HCT116 (cell line): ENCODE measurements at regions of chr11 and their contacts with region 1.

Region 1: DNA sequence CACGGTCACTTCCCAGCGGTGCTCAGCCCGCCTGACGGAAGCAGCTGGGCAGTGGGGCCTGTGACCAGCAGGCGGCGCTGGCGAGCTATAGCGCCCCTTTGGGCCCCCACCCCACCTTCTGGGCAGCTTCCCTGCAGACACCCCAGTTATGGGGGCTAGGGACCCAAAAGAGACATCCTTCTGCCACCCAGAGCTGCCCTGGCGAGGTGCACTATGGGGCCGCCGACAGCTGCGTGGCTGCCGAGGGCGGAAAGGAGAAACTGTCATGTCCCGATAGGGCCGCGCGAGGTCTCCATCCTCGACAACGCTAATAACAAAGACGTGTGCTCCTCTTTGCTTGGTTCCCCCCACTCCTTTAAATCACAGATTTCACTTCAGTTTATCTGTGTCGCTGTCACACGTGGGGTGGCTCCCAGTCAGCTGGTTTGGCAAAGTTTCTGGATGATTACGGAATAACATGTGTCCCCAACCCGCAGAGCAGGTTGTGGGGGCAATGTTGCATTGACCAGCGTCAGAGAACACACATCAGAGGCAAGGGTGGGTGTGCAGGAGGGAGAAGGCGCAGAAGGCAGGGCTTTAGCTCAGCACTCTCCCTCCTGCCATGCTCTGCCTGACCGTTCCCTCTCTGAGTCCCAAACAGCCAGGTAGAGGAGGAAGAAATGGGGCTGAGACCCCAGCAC is 674 bp upstream of the MYO7A start:
- DNase-seq: no peak
- ATAC-seq: peak; percentile 89
- H3K4me3 ChIP-seq: peak overlapping the region; percentile 43 to 60
- H3K27ac ChIP-seq: no peak overlapping the region; the same call in 1 of the 2 replicates
- H3K4me1 ChIP-seq: peaks cover 3 to 15% of the 10 kb centered on the region in 2 experiments; a peak in 3 of 4 replicates
- H3K27me3 ChIP-seq: no peaks in the 10 kb centered on the region
- CTCF ChIP-seq: peak; percentile 99
- POLR2A ChIP-seq: no peak
- RAD21 ChIP-seq: peak; percentile 84

Region 2: DNA sequence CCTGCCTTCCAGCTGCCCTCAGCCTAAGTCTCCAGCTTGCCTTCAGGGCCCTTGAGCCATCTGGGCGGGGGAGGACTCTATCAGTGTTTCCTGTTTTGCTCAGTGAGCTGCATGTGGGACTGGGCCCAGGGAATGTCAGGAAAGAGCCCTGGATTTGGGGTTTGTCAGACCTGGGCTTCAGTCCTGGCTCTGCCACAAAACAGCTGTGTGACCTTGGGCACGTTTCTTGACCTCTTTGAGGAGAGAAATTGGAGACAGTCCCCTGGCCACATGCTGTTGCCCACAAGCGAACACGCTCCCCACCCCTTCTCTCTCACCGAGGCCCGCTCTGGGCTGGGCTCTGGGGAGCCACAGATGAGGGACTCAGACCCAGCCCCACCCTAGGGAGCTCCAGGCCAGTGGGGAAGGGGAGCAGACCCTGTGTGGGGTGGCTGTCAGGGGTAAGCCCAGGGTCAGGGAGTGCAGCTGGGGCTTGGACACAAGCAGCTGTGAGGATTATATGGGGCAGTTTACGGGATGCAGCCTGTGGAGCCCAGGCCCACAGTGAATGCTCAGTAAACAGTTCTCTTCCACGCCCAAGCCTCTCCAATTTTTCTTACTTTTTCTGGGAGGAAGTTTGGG is 13.0 kb after region 1 on chr11:
- CTCF ChIA-PET with region 1: interaction called, 15 read pairs
- POLR2A ChIA-PET with region 1: no interaction called
- RAD21 ChIA-PET with region 1: no interaction called
- intact Hi-C with region 1: no loop called
- DNase-seq: no peak
- ATAC-seq: no peak
- H3K4me3 ChIP-seq: no peak overlapping the region
- H3K27ac ChIP-seq: no peak overlapping the region
- H3K4me1 ChIP-seq: peaks cover 0 to 8% of the 10 kb centered on the region in 2 experiments; a peak in 1 of 4 replicates
- H3K27me3 ChIP-seq: no peaks in the 10 kb centered on the region
- CTCF ChIP-seq: no peak
- POLR2A ChIP-seq: no peak
- RAD21 ChIP-seq: no peak

Region 3: DNA sequence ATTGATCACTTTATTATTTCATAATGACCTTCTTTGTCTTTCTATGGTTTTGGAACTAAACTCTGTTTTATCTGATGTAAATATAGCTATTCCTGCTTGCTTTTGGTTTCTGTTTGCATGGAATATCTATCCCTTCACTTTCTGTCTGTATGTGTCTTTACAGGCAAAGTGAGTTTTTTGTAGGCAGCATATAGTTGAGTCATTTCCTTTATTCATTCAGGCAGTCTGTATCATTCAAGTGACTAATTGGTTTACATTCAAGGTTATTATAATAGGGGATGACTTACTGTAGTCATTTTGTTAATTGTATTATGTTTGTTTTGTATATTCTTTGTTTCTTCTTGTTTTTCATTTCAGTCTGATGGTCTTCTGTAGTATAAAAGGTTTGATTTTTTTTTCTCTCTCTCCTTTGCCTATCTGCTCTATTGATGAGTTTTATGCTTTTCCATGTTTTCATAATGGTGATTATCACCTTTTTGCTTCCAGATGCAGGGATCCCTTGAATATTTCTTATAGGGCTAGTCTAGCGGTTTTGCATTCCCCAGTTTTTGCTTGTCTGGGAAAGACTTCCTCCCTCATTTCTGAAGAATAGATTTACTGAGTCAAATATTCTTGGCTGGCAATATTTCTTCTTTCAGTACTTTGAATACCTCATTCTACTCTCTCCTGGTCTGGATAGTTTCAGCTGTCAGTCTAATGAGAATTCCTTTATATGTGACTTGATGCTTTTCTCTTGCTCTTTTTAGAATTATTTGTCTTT is 123.7 kb after region 1 on chr11:
- CTCF ChIA-PET with region 1: no interaction called
- POLR2A ChIA-PET with region 1: no interaction called
- RAD21 ChIA-PET with region 1: no interaction called
- intact Hi-C with region 1: no loop called
- DNase-seq: no peak
- ATAC-seq: no peak
- H3K4me3 ChIP-seq: no peak overlapping the region
- H3K27ac ChIP-seq: no peak overlapping the region
- H3K4me1 ChIP-seq: peaks cover 0 to 20% of the 10 kb centered on the region in 2 experiments; a peak in 1 of 4 replicates
- H3K27me3 ChIP-seq: no peaks in the 10 kb centered on the region
- CTCF ChIP-seq: no peak
- POLR2A ChIP-seq: no peak
- RAD21 ChIP-seq: no peak

Region 4: GRCh38 chr11:77473801-77474683 is 346.7 kb after region 1 on chr11 and contains the start of gene PAK1:
- CTCF ChIA-PET with region 1: no interaction called
- POLR2A ChIA-PET with region 1: no interaction called
- RAD21 ChIA-PET with region 1: no interaction called
- intact Hi-C with region 1: no loop called
- DNase-seq: peak; percentile 86
- ATAC-seq: peak; percentile 82
- H3K4me3 ChIP-seq: peak within 1 kb of the TSS; percentile 53 to 67
- H3K27ac ChIP-seq: peak within 1 kb of the TSS; percentile 52; the same call in 1 of the 2 replicates
- H3K4me1 ChIP-seq: peaks cover 18 to 29% of the 10 kb centered on the region in 2 experiments
- H3K27me3 ChIP-seq: no peaks in the 10 kb centered on the region
- CTCF ChIP-seq: 0 out of 6 replicates have a peak, but pooled peaks of 1 of the 3 experiments have one; percentile 16
- POLR2A ChIP-seq: no peak
- RAD21 ChIP-seq: no peak
- total RNA-seq, gene PAK1: 56.1 TPM

Region 5: DNA sequence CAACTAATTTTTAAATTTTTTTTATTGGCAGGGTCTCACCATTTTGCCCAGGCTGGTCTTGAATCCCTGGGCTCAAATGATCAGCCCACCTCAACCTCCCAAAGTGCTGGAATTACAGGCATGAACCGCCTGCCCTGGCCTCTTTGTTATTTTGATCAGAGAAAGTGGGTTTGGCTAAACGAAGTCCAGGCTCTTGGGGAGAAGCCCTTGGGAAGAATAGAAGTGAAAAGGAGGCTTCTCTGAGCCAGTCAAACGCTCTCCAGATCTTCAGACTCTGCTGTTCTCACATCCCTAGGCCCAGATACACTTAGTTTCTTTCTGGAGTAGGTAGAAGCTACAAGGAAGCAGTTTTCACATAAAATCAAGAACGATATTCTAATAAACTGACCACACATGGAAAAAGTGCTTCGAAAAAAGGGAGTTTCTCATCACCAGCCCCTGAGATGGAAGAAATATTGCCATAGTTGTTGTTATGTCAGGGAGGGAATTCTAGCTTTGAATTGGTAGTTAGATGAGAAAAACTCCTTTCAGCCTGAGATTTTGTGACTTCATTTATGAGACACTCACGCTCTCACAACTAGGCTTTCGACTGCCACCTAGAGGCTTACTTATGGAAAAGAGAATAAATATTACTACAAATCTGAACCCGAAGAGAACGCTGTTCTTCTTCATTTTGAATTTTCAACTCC is 420.6 kb after region 1 on chr11:
- CTCF ChIA-PET with region 1: interaction called, 3 read pairs
- POLR2A ChIA-PET with region 1: no interaction called
- RAD21 ChIA-PET with region 1: interaction called in 1 of 2 experiments, 4 read pairs
- intact Hi-C with region 1: loop called (anchors 1 kb)
- DNase-seq: peak; percentile 37
- ATAC-seq: peak; percentile 67
- H3K4me3 ChIP-seq: no peak overlapping the region
- H3K27ac ChIP-seq: no peak overlapping the region
- H3K4me1 ChIP-seq: no peaks in the 10 kb centered on the region
- H3K27me3 ChIP-seq: no peaks in the 10 kb centered on the region
- CTCF ChIP-seq: peak; percentile 49 to 93 (median 64)
- POLR2A ChIP-seq: no peak
- RAD21 ChIP-seq: peak; percentile 91

Region 6: GRCh38 chr11:77619576-77620198 is 492.3 kb after region 1 on chr11:
- CTCF ChIA-PET with region 1: interaction called, 12 read pairs
- POLR2A ChIA-PET with region 1: no interaction called
- RAD21 ChIA-PET with region 1: no interaction called
- intact Hi-C with region 1: loop called (anchors 1 kb)
- DNase-seq: peak; percentile 44
- ATAC-seq: peak; percentile 65
- H3K4me3 ChIP-seq: no peak overlapping the region
- H3K27ac ChIP-seq: no peak overlapping the region
- H3K4me1 ChIP-seq: no peaks in the 10 kb centered on the region
- H3K27me3 ChIP-seq: no peaks in the 10 kb centered on the region
- CTCF ChIP-seq: peak; percentile 63 to 80 (median 78)
- POLR2A ChIP-seq: no peak
- RAD21 ChIP-seq: peak; percentile 81